A673 (cell line): ENCODE measurements at regions of chr10 and their contacts with region 1.

Region 1: GRCh38 chr10:68988530-68989316 is at the start of gene KIFBP:
- DNase-seq: peak; percentile 99
- H3K4me3 ChIP-seq: peak within 1 kb of the TSS; percentile 79
- H3K27ac ChIP-seq: peak within 1 kb of the TSS; percentile 78
- H3K4me1 ChIP-seq: peaks cover 8% of the 10 kb centered on the region
- H3K27me3 ChIP-seq: no peaks in the 10 kb centered on the region
- CTCF ChIP-seq: peak; percentile 65
- total RNA-seq, gene KIFBP: 40.5 and 42.8 TPM in 2 replicates

Region 2: DNA sequence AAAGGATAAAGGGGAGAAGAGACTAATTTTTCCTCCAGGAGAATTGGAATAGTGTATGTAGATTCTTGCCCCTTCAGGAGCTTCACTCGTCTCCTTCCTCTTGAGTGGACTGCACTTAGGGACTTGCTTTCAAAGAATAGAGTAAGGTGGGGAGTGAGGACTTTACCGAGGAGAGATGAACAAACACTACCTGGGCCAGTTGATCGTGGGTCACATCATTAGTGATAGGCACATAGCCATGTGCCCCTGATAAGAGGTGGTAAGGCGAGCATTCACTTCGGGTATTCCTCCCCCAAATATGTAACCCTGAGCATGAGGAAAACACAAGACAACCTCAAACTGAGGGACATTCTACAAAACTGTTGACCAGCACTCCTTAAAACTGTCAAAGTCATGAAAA is 14.7 kb before region 1 on chr10:
- CTCF ChIA-PET with region 1: no interaction called
- POLR2A ChIA-PET with region 1: no interaction called
- intact Hi-C with region 1: no loop called
- DNase-seq: no peak
- H3K4me3 ChIP-seq: no peak overlapping the region
- H3K27ac ChIP-seq: no peak overlapping the region
- H3K4me1 ChIP-seq: no peaks in the 10 kb centered on the region
- H3K27me3 ChIP-seq: no peaks in the 10 kb centered on the region
- CTCF ChIP-seq: no peak

Region 3: GRCh38 chr10:69018613-69019012 is 29.9 kb after region 1 on chr10:
- CTCF ChIA-PET with region 1: no interaction called
- POLR2A ChIA-PET with region 1: no interaction called
- intact Hi-C with region 1: no loop called
- DNase-seq: no peak
- H3K4me3 ChIP-seq: no peak overlapping the region
- H3K27ac ChIP-seq: no peak overlapping the region
- H3K4me1 ChIP-seq: no peaks in the 10 kb centered on the region
- H3K27me3 ChIP-seq: no peaks in the 10 kb centered on the region
- CTCF ChIP-seq: no peak

Region 4: DNA sequence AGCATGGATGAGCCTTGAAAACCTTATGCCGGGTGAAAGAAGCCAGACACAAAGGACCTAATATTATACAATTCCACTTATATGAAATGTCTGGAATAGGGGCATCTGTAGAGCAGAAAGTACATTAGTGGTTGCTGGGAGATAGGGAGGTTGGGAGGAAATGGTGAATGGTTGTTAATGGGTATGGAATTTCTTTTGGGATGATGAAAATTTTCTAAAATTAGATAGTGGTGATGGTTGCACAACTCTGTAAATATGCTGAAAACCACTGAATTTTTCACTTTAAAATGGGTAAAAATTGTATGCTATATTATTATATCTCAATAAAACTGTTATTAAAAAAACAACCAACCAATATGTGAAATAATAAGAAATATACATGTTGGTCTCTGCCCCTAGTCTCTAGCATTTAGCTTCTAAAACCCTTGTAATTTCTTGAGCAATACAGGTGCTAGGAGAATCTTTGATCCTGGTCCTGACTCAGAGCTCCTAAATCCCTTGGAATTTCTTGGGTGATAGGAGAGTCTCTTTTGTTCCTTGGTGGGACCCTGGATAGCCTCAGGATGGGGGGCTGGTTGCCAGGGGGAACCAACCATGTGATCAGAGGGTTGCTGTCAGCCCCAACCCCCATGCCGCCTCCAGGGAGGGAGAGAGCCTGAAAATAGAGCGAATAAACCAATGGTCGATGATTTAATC is 364.0 kb after region 1 on chr10:
- CTCF ChIA-PET with region 1: no interaction called
- POLR2A ChIA-PET with region 1: interaction called, 15 read pairs
- intact Hi-C with region 1: no loop called
- DNase-seq: no peak
- H3K4me3 ChIP-seq: no peak overlapping the region
- H3K27ac ChIP-seq: no peak overlapping the region
- H3K4me1 ChIP-seq: no peaks in the 10 kb centered on the region
- H3K27me3 ChIP-seq: no peaks in the 10 kb centered on the region
- CTCF ChIP-seq: no peak

Region 5: DNA sequence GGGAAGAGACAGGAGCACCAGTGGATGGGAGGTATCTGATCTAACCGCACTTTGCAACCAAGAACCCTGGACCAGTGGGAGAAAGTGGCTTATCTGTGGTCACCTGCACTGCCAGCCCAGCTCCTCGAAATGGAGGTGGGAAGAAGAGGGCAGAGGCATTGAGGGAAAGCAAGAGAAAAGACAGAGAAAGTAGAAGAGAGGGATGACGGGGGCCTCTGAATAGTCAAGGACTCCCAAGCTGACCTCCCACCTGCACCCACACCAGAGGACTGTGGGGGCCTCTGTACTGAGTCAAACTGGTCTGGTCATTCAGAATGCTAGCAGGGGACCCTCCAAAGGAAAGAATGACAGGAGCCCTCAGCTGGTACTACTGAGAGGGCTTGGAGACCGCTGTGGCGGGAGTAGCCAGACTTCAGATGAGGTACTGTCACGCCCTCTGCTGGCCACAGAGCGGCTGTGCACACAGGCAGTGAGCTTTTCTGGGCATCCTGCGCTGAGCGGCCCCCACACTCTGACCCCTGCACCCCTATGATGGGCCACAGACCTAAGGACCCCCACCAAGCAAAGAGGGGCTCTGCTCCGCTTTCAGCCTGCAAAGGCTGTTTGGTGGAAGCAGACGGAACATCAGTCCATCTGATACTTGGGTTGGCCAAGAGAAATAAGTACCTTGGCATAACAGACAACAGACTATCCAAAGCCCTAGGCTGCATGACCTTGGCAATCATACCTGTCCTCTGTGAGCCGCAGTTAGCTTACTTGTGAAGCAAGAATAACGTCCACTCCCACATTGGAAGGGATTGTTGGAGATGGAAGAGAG is 925.9 kb after region 1 on chr10:
- CTCF ChIA-PET with region 1: no interaction called
- POLR2A ChIA-PET with region 1: no interaction called
- intact Hi-C with region 1: no loop called
- DNase-seq: peak; percentile 81
- H3K4me3 ChIP-seq: no peak overlapping the region
- H3K27ac ChIP-seq: no peak overlapping the region
- H3K4me1 ChIP-seq: peaks cover 20% of the 10 kb centered on the region
- H3K27me3 ChIP-seq: no peaks in the 10 kb centered on the region
- CTCF ChIP-seq: peak; percentile 96